ENCODE measurements at regions of chr11 and their contacts with region 1.

Region 1: GRCh38 chr11:124415356-124415923 is 9.2 kb downstream of the OR8B4 start:
- DNase-seq: peak; percentile 69
- ATAC-seq: peak; percentile 46; the same call in 1 of the 2 replicates
- H3K4me3 ChIP-seq: no peak overlapping the region
- H3K27ac ChIP-seq: no peak overlapping the region
- H3K4me1 ChIP-seq: no peaks in the 10 kb centered on the region
- H3K27me3 ChIP-seq: peaks cover 14% of the 10 kb centered on the region
- CTCF ChIP-seq: peak; percentile 78
- POLR2A ChIP-seq: no peak
- RAD21 ChIP-seq: peak; percentile 70

Region 2: DNA sequence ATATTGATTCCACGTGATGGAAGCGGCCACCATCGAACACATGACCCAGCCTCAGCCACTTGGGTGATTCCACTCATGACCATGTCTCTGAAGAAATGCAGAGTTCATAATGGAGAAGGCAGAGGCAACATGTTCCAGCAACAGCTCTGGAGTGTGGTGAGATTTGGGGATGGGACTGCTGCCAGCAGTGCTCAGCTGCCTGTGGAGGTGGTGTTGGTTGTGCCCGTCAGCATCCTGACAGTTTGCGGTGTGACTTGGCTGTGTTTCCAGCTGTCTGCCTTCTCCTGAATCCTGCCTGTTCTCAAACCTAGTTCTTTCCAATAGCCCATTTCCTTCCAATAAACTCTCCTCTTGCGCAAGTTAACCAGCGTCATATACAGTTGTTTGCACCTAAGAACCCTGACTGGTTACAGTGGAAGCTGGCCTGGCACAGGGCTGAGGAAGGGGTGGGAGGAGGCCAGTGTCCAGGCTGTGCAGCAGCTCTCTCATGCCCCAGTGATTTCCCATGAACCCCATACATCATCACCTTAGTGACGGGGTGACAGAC is 52.0 kb after region 1 on chr11:
- CTCF ChIA-PET with region 1: no interaction called
- POLR2A ChIA-PET with region 1: no interaction called
- dilution Hi-C with region 1: no loop called
- in situ Hi-C with region 1: no loop called
- intact Hi-C with region 1: no loop called
- DNase-seq: peak; percentile 2
- ATAC-seq: no peak
- H3K4me3 ChIP-seq: no peak overlapping the region
- H3K27ac ChIP-seq: no peak overlapping the region
- H3K4me1 ChIP-seq: no peaks in the 10 kb centered on the region
- H3K27me3 ChIP-seq: peaks cover 9% of the 10 kb centered on the region
- CTCF ChIP-seq: no peak
- POLR2A ChIP-seq: no peak
- RAD21 ChIP-seq: no peak

Region 3: GRCh38 chr11:124586238-124586860 is 170.9 kb after region 1 on chr11:
- CTCF ChIA-PET with region 1: interaction called, 6 read pairs
- POLR2A ChIA-PET with region 1: no interaction called
- dilution Hi-C with region 1: no loop called
- in situ Hi-C with region 1: loop called (anchors 5 kb)
- intact Hi-C with region 1: loop called (anchors 1 kb)
- DNase-seq: peak; percentile 66
- ATAC-seq: no peak; the same call in 1 of the 2 replicates
- H3K4me3 ChIP-seq: no peak overlapping the region
- H3K27ac ChIP-seq: no peak overlapping the region
- H3K4me1 ChIP-seq: no peaks in the 10 kb centered on the region
- H3K27me3 ChIP-seq: peaks cover 25% of the 10 kb centered on the region
- CTCF ChIP-seq: peak; percentile 76
- POLR2A ChIP-seq: no peak
- RAD21 ChIP-seq: peak; percentile 60

Region 4: GRCh38 chr11:125141686-125142535 is 726.5 kb after region 1 on chr11:
- CTCF ChIA-PET with region 1: no interaction called
- POLR2A ChIA-PET with region 1: no interaction called
- dilution Hi-C with region 1: no loop called
- in situ Hi-C with region 1: no loop called
- intact Hi-C with region 1: loop called (anchors 5 kb)
- DNase-seq: peak; percentile 29
- ATAC-seq: peak; percentile 100
- H3K4me3 ChIP-seq: no peak overlapping the region
- H3K27ac ChIP-seq: no peak overlapping the region
- H3K4me1 ChIP-seq: no peaks in the 10 kb centered on the region; the same call in 1 of the 2 replicates
- H3K27me3 ChIP-seq: peaks cover 13% of the 10 kb centered on the region
- CTCF ChIP-seq: peak; percentile 83
- POLR2A ChIP-seq: 0 out of 2 replicates have a peak, but pooled peaks have one; percentile 29
- RAD21 ChIP-seq: peak; percentile 82

Measured in IMR-90 (cell line).